ENCODE measurements at regions of chr16 and their contacts with region 1.

Region 1: GRCh38 chr16:78134929-78135619 is 35.6 kb downstream of the WWOX start:
- DNase-seq: no peak

Region 2: GRCh38 chr16:78770353-78771091 is 635.4 kb after region 1 on chr16:
- intact Hi-C with region 1: loop called (anchors 10 kb)
- DNase-seq: peak; percentile 31 to 94 (median 80)

Measured in head of caudate nucleus (tissue), 42 donors.